BJ (cell line): ENCODE measurements at regions of chr5 and their contacts with region 1.

Region 1: DNA sequence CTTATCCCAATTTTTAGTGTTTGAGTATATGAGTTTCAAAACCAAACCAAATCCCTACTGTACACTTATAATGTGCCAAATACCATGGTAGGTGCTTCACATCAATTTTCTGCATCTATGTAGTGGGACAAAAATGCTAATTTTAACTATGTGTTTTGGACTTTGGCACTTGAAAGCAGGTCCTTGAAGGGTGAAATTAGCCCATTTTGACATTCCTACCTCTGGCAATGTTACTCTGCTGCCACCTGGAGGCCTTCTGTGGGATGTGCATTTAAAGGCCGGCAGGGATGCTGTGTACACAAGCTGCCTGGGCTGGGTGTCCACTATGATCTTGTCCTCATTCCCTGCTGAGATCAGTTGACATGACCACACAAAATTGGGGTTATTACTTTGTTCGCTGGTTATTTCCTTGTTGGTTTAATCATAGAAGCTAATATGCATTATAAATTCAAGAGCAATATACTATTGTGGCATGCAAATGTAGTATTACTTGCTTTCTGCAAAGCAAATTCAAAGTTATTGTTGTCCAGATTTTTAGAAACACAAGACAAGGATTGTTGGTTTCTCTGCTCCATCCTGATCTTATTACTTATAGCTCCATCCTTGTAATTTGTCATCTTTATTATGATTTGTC is 166.8 kb downstream of the ARHGEF28 start:
- DNase-seq: peak; percentile 18
- H3K4me3 ChIP-seq: no peak overlapping the region
- H3K27me3 ChIP-seq: no peaks in the 10 kb centered on the region
- CTCF ChIP-seq: peak; percentile 97

Region 2: DNA sequence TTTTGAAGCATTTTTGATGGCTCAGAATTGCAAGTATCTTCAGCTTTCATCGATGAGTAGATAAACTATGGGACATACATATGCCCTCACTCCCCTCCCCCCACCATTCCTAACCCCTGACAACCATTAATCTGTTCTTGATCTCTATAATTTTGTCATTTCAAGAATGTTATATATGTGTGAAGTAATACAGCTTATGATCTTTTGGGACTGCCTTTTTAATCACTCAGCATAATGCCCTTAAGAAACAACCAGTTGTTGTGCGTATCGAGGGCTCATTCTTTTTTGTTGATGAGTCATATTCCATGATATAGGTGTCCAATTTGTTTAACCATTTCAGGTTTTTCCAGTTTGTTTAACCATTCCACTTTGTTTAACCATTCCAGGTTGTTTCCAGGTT is 91.3 kb before region 1 on chr5:
- CTCF ChIA-PET with region 1: no interaction called
- POLR2A ChIA-PET with region 1: no interaction called
- DNase-seq: no peak
- H3K4me3 ChIP-seq: no peak overlapping the region
- H3K27me3 ChIP-seq: no peaks in the 10 kb centered on the region
- CTCF ChIP-seq: no peak

Region 3: DNA sequence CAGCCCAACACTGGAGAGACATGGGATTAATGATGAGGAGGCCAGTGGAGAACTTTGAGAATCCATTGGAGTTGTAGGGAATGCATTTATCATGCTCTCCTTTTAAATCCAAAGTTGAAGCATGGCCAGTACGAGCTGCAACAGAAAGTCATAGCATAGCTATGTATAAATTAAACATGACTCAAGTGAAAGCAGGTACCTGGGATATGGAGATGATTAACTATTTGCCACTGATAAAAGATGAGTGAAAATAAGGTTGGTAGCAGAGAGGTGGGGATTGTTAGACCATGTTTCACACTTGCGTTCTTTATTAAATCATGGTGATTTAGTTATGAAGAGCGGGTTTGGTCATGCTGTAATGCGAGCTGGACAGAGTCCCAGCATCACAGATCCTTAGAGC is 22.8 kb after region 1 on chr5:
- CTCF ChIA-PET with region 1: interaction called, 10 read pairs
- POLR2A ChIA-PET with region 1: no interaction called
- DNase-seq: no peak
- H3K4me3 ChIP-seq: no peak overlapping the region
- H3K27me3 ChIP-seq: no peaks in the 10 kb centered on the region
- CTCF ChIP-seq: no peak

Region 4: DNA sequence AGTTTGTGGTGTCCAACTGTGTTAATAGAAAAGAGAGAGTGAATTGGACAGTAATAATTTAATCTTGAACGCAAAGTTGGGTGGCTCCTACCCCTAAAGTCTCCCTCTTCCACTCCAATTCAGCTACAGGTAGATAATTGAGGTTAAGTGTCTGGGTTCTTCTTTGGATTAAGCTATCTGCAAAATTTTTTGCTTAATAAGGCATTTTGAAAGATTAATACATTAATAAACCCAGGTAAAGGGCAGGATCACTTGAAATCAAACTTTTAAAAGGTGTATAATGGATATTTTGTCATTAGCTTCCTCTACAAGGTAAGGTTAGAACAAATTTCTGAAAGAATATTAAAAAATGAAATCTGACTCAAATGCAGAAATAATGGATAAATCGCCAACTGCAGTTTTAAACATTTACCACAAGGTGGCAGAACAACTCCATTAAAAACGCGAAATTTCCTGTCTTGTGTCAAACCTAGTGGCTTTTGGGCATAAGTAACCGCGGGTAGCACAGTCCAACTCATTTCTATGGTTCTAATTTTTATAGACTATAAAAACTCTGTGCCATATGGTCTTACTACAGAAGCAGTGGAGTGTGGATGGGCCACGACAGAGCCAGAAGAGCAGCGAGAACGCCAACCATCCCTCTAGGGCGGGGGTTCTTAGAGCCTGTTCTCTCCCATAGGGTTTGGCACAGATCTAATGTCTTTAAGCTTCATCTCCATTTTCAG is 109.7 kb after region 1 on chr5:
- CTCF ChIA-PET with region 1: interaction called, 19 read pairs
- POLR2A ChIA-PET with region 1: no interaction called
- DNase-seq: no peak
- H3K4me3 ChIP-seq: no peak overlapping the region
- H3K27me3 ChIP-seq: no peaks in the 10 kb centered on the region
- CTCF ChIP-seq: peak; percentile 58